CD8-positive, alpha-beta T cell (primary cell): ENCODE measurements at regions of chr11 and their contacts with region 1.

Region 1: DNA sequence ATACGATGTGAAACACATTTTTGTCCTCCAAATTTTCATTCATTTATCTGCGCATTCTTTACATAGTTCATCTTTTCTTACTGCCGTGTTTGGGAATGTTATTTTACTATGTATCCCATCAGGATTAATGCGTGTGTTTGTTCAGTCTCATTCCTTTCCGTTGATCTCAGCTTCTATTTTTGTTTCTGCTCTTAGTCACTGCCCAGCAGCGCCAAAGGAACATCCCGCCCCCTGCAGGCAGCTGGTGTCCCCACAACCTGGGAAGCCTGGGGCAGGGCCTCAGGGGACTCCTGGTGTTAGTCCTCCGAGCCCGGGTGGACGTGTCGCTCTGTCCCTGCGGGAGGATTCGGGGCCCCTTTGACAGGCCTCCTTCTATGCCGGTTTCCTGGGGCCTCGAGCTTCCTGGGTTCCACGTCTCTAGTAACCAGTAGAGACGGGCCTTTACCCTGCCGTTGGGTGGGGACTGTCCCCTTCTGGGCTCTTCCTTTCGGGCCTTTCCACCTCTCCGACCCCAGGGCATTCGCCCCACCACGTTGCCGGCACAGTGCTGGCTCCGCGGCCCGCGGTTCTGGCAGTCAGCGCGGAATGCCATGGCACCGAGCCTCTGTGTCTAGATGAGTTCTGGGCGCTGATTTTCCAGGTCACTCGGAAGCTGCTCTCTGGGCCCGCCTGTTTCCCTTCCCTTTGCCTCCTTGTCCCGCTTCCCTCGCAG is 39.8 kb downstream of the WEE1 start:
- DNase-seq: peak; percentile 70 to 90 (median 84)
- ATAC-seq: peak; percentile 49
- H3K4me3 ChIP-seq: peak overlapping the region; percentile 69 to 70
- H3K4me3 Mint-ChIP-seq: peak overlapping the region; percentile 97
- H3K27ac ChIP-seq: peak overlapping the region; percentile 49 to 88
- H3K27ac Mint-ChIP-seq: peak overlapping the region; percentile 94
- H3K4me1 ChIP-seq: peaks cover 12% of the 10 kb centered on the region
- H3K4me1 Mint-ChIP-seq: peaks cover 16% of the 10 kb centered on the region
- H3K27me3 ChIP-seq: no peaks in the 10 kb centered on the region
- H3K27me3 Mint-ChIP-seq: no peaks in the 10 kb centered on the region
- CTCF ChIP-seq: peak; percentile 79

Region 2: DNA sequence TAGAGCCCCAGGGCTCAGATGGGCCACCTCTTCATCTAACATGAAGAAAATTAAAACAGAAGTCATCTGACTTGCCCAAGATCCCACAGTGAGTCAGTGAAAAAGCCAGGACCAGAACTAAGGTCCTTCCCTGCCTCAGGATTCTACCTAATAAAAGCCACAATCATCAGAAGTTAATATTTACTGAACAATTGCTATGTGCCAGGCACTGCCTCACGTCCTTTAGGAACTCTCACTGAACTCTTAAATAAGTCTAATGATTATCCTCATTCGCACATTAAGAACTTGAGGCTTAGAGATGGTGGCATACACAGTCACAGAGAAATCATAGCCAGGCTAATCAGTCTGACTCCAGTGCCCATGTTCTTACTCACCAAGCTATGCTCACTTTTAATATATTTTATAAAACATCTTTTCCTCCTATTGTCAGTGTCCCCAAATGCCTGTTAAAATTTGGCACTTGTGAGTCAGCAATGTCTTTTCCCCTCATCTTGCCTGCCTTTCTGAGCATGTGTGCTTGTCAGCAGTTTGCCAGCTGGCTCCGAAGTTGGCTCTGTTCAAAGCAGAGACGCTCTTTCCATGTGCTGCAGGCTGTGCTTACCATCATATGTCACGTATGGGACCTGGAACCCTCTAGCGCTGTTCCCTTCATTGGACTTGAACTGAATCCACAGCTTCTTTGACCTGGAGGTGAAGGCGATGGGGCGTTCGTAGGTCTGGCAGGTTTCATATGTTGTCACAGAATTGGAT is 588.0 kb before region 1 on chr11:
- CTCF ChIA-PET with region 1: no interaction called
- POLR2A ChIA-PET with region 1: no interaction called
- intact Hi-C with region 1: no loop called
- DNase-seq: no peak
- ATAC-seq: no peak
- H3K4me3 ChIP-seq: no peak overlapping the region
- H3K4me3 Mint-ChIP-seq: no peak overlapping the region
- H3K27ac ChIP-seq: no peak overlapping the region
- H3K27ac Mint-ChIP-seq: no peak overlapping the region
- H3K4me1 ChIP-seq: no peaks in the 10 kb centered on the region
- H3K4me1 Mint-ChIP-seq: no peaks in the 10 kb centered on the region
- H3K27me3 ChIP-seq: peaks cover 0 to 3% of the 10 kb centered on the region in 2 experiments
- H3K27me3 Mint-ChIP-seq: peaks cover 2% of the 10 kb centered on the region
- CTCF ChIP-seq: no peak

Region 3: GRCh38 chr11:9534791-9535781 is 78.2 kb before region 1 on chr11:
- CTCF ChIA-PET with region 1: interaction called, 113 read pairs
- POLR2A ChIA-PET with region 1: interaction called, 13 read pairs
- intact Hi-C with region 1: loop called in 1 of 2 experiments (anchors 1 kb)
- DNase-seq: peak; percentile 53 to 87 (median 79)
- ATAC-seq: peak; percentile 61
- H3K4me3 ChIP-seq: no peak overlapping the region
- H3K4me3 Mint-ChIP-seq: no peak overlapping the region
- H3K27ac ChIP-seq: no peak overlapping the region
- H3K27ac Mint-ChIP-seq: no peak overlapping the region
- H3K4me1 ChIP-seq: no peaks in the 10 kb centered on the region
- H3K4me1 Mint-ChIP-seq: no peaks in the 10 kb centered on the region
- H3K27me3 ChIP-seq: no peaks in the 10 kb centered on the region
- H3K27me3 Mint-ChIP-seq: no peaks in the 10 kb centered on the region
- CTCF ChIP-seq: peak; percentile 75

Region 4: DNA sequence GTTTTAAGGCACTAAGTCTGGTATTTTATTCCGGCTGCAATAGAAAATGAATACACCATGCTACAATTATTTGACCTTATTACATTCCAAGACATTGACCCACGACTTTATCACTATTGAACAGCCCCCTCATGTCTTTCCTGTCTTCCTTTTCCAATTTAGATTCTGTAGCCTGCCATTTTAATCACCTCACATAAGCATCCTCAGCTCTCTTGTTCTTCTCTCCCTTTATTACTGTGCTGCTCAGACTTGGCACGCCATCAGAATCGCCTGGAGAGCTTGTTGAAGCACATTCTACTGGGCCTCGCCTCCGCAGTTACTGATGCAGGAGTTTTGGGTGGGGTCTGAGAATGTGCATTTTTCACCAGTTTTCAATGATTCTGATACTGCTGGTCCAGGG is 11.9 kb after region 1 on chr11:
- CTCF ChIA-PET with region 1: interaction called, 12 read pairs
- POLR2A ChIA-PET with region 1: no interaction called
- intact Hi-C with region 1: no loop called
- DNase-seq: no peak
- ATAC-seq: no peak
- H3K4me3 ChIP-seq: no peak overlapping the region
- H3K4me3 Mint-ChIP-seq: no peak overlapping the region
- H3K27ac ChIP-seq: no peak overlapping the region
- H3K27ac Mint-ChIP-seq: no peak overlapping the region
- H3K4me1 ChIP-seq: no peaks in the 10 kb centered on the region
- H3K4me1 Mint-ChIP-seq: no peaks in the 10 kb centered on the region
- H3K27me3 ChIP-seq: no peaks in the 10 kb centered on the region
- H3K27me3 Mint-ChIP-seq: peaks cover 2% of the 10 kb centered on the region
- CTCF ChIP-seq: no peak

Region 5: GRCh38 chr11:9748361-9748970 is 135.2 kb after region 1 on chr11:
- CTCF ChIA-PET with region 1: interaction called, 31 read pairs
- POLR2A ChIA-PET with region 1: interaction called, 6 read pairs
- intact Hi-C with region 1: loop called (anchors 1 to 5 kb)
- DNase-seq: peak; percentile 15 to 82 (median 55)
- ATAC-seq: peak; percentile 98
- H3K4me3 ChIP-seq: no peak overlapping the region
- H3K4me3 Mint-ChIP-seq: no peak overlapping the region
- H3K27ac ChIP-seq: no peak overlapping the region
- H3K27ac Mint-ChIP-seq: no peak overlapping the region
- H3K4me1 ChIP-seq: no peaks in the 10 kb centered on the region
- H3K4me1 Mint-ChIP-seq: peaks cover 3% of the 10 kb centered on the region
- H3K27me3 ChIP-seq: no peaks in the 10 kb centered on the region
- H3K27me3 Mint-ChIP-seq: no peaks in the 10 kb centered on the region
- CTCF ChIP-seq: peak; percentile 55

Region 6: GRCh38 chr11:10322830-10323792 is 709.8 kb after region 1 on chr11:
- CTCF ChIA-PET with region 1: interaction called, 3 read pairs
- POLR2A ChIA-PET with region 1: no interaction called
- intact Hi-C with region 1: loop called in 1 of 2 experiments (anchors 5 kb)
- DNase-seq: peak in 5 of 9 experiments; percentile 26 to 67 (median 38)
- ATAC-seq: peak; percentile 82
- H3K4me3 ChIP-seq: no peak overlapping the region
- H3K4me3 Mint-ChIP-seq: no peak overlapping the region
- H3K27ac ChIP-seq: no peak overlapping the region
- H3K27ac Mint-ChIP-seq: no peak overlapping the region
- H3K4me1 ChIP-seq: no peaks in the 10 kb centered on the region
- H3K4me1 Mint-ChIP-seq: peaks cover 3% of the 10 kb centered on the region
- H3K27me3 ChIP-seq: no peaks in the 10 kb centered on the region
- H3K27me3 Mint-ChIP-seq: peaks cover 4% of the 10 kb centered on the region
- CTCF ChIP-seq: peak; percentile 55